HAP-1 (cell line): ENCODE measurements at regions of chr6 and their contacts with region 1.

Region 1: DNA sequence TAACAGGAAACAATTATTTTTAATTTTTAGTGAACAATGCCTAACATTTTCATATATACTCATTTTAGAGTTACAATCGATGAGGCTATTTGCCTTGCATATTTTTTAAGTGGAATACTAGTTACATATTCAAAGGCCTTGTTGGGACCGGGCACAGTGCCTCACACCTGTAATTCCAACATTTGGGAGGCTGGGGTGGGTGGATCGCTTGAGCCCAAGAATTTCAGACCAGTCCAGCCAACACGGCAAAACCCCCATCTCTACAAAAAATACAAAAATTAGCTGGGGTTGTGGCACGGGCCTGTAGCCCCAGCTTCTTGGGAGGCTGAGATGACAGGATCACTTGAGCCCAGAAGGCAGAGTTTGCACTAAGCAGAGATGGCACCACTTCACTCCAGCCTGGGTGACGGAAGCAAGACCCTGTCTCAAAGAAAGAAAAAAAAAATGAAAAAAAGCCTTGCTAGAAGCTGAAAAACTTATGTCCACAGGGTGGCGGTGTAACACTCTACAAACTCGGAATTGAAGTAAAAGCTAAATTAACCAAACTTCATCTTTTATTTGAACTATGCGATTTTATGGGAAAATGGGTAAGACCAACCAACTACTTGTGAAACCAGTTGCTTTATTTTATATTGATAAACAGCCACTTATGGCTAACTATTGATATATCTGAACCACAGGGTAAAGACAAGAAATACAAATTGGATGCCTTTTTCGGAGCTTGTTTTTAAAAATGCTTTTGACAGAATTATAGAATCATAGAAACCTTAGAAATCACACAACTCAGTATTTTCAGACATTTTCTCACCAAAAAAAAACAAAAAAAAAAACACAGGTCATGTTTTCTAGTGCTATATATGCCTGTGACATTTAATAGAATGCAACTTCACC is 24.1 kb upstream of the ROS1 start:
- DNase-seq: peak; percentile 76 to 79
- H3K4me3 ChIP-seq: no peak overlapping the region
- H3K4me1 ChIP-seq: peaks cover 4% of the 10 kb centered on the region; the same call in 1 of the 2 replicates
- H3K27me3 ChIP-seq: peaks cover 18% of the 10 kb centered on the region

Region 2: GRCh38 chr6:117050301-117050700 is 399.5 kb before region 1 on chr6:
- in situ Hi-C with region 1: no loop called
- DNase-seq: no peak
- H3K4me3 ChIP-seq: no peak overlapping the region
- H3K4me1 ChIP-seq: no peaks in the 10 kb centered on the region
- H3K27me3 ChIP-seq: no peaks in the 10 kb centered on the region

Region 3: DNA sequence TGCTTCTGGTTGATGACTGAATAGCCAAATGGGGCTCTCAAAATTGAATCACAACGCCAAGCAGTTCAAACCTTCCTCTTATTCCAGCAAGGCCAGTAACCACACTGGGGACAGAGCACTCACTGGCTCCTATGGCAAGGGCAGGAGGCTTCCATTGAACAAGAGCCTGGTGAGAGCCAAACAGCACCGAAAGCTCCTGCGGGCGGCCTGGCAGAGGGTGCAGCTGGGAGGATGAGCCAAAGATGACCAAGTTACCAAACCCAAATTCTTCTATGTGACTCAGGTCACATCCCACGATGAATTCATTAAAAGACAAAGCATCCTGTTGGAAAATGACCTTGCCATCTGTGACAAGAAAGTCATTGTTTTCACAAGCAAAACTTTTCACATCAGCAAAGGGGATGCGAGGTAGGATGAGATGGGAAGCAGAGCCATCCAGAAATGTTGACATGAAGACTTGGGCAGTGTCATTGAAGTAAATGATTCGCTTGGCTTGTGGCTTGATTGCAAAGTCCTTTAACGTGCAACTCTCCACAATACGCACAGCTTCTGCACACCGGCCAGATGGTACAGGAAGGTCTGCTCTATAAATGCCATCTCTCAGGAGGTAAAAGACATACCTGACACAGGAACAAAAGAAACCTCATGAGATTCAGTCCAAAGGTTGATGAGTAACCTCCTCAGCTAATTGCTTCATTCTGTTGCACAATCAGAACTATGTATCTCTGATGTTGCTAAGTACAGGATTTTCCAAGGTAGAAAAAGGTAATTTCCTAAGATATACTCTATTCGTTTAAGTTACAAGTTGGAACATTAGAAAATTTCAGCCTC is 60.4 kb before region 1 on chr6:
- in situ Hi-C with region 1: no loop called
- DNase-seq: no peak
- H3K4me3 ChIP-seq: no peak overlapping the region
- H3K4me1 ChIP-seq: no peaks in the 10 kb centered on the region
- H3K27me3 ChIP-seq: peaks cover 31% of the 10 kb centered on the region

Region 4: DNA sequence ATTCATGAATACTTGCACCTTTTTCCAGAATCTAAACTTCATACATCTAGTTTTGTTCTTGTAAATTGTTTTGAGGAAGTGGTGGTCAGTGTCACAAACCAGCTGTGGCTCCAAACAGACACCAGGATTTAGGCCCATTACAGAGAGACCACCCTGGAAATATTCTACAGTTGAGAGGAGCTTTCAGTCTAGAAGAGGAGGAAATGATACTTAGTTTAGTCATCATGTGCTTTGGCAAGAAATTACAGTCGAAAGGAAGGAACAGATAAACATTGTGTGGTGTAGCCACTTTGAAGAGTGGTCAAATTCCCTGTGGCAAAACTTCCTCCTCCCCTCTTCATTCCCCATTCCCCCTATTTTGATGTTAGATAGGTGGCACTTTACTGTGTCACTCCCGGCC is 48.4 kb after region 1 on chr6:
- in situ Hi-C with region 1: no loop called
- DNase-seq: no peak
- H3K4me3 ChIP-seq: no peak overlapping the region
- H3K4me1 ChIP-seq: no peaks in the 10 kb centered on the region
- H3K27me3 ChIP-seq: no peaks in the 10 kb centered on the region

Region 5: DNA sequence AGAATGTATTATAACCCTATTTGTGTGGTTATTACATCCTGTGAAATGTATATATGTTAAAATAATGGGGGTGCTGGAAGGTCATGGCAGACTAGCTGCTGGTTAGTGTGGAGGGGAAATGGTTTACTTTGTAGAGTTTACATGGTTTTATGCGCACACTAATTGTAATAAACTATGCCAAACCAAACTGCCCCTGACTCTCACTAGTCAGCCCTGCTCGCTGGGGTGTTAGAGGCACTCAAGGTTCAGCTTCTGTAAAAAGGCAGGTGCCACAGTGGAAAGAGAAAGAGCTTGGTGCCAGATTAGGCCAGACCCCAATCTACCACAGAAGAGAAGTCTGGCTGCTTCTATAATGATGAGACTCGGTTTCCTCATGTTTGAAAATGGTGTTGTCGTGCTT is 99.8 kb after region 1 on chr6:
- in situ Hi-C with region 1: loop called (anchors 5 kb)
- DNase-seq: no peak
- H3K4me3 ChIP-seq: no peak overlapping the region
- H3K4me1 ChIP-seq: peaks cover 13% of the 10 kb centered on the region
- H3K27me3 ChIP-seq: no peaks in the 10 kb centered on the region